Ovary (tissue), 10 donors: ENCODE measurements at regions of chr11 and their contacts with region 1.

Region 1: GRCh38 chr11:14611939-14612338 is 31.7 kb upstream of the PDE3B start:
- DNase-seq: no peak
- H3K4me3 ChIP-seq: no peak overlapping the region
- H3K27ac ChIP-seq: no peak overlapping the region
- H3K4me1 ChIP-seq: no peaks in the 10 kb centered on the region
- H3K27me3 ChIP-seq: no peaks in the 10 kb centered on the region
- CTCF ChIP-seq: no peak
- EP300 ChIP-seq: no peak
- POLR2A ChIP-seq: no peak

Region 2: DNA sequence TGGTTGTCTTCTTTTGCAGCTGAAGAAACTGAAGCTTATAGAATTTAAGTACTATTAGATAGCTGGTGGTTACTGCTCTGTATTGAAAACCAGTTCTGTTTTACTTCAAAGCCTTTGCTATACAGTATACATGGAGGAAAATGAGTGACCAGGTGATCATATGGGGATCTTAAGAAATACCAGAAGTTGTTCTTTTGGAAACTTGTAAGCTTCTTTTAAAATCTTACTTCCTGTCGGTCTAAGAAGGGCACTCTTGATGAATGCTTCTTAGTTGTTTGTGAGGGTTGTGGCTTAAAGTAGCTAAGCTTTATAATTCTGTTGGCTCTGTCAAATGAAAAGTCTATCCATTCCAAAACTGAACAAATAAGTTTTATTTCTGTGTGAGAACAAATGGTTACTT is 86.8 kb after region 1 on chr11:
- intact Hi-C with region 1: loop called in 1 of 4 experiments (anchors 5 kb)
- DNase-seq: no peak
- H3K4me3 ChIP-seq: no peak overlapping the region
- H3K27ac ChIP-seq: no peak overlapping the region
- H3K4me1 ChIP-seq: no peaks in the 10 kb centered on the region
- H3K27me3 ChIP-seq: no peaks in the 10 kb centered on the region
- CTCF ChIP-seq: no peak
- EP300 ChIP-seq: no peak
- POLR2A ChIP-seq: no peak